ENCODE measurements at regions of chr12 and their contacts with region 1.

Region 1: DNA sequence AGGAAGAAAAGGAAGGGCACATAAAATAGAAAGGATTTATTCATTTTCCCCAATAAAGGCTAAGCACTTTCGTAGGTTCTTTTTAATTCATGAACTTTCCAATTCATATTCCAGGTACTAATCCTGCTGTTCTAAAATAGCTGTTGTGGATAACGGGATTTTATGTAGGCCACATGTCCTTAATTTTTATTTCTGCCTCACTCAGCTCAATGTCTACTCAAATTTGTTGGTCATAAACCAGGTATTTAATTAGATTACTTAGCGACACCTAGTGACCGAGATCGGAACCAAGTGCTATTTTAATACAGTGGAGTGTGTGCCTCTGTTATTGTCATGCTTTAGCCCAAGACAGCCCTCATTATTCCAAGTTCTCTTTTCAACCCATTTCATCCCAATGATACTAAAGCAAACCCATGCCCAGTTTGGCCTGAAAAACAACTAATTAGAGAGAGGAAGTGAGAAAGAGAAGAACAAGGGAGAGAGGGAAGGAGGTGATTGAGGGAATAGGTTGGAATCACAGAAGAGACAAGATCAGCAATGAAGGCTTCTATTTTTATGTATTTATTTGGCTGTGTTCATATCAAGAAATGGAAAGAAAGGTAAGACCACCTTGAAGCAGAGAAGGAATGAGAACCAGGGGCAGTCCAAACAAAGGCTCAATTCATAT is 45.9 kb upstream of the IFNG-AS1 start:
- DNase-seq: peak in 33 of 35 experiments; percentile 15 to 83 (median 50)
- ATAC-seq: peak; percentile 69 to 87 (median 77)
- H3K4me3 ChIP-seq: no peak overlapping the region
- H3K4me3 Mint-ChIP-seq: no peak overlapping the region
- H3K27ac ChIP-seq: no peak overlapping the region
- H3K27ac Mint-ChIP-seq: no peak overlapping the region
- H3K4me1 ChIP-seq: peaks cover 0 to 2% of the 10 kb centered on the region in 2 experiments
- H3K4me1 Mint-ChIP-seq: peaks cover 1 to 6% (median 5%) of the 10 kb centered on the region in 3 donors
- H3K27me3 ChIP-seq: no peaks in the 10 kb centered on the region
- H3K27me3 Mint-ChIP-seq: peaks cover 0 to under 1% of the 10 kb centered on the region in 2 donors

Region 2: DNA sequence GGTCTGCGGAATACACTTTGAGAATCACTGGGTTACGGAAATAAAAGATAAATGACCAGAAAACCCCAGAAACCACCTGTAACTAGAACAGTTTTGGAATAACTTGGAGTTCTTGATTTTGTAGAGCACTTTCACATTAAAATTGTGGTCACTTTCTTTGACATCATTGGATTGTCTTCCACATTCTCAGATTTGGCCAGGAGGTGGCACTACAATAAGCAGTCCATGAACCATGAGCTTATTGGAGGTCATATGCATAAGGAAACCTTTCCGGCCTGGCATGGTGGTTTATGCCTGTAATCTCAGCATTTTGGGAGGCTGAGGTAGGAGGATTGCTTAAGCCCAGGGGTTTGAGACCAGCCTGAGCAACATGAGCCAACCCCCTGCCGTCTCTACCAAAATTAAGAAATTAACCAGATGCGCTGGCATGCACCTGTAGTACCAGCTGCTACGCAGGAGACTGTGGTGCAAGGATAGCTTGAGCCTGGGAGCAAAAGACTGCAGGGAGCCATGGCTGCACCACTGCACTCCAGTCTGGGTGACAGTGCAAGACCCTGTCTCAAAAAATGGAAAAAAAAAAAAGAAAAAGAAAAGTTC is 781.9 kb before region 1 on chr12:
- CTCF ChIA-PET with region 1: interaction called, 5 to 12 read pairs
- POLR2A ChIA-PET with region 1: no interaction called
- DNase-seq: peak in 25 of 35 experiments; percentile 0 to 51 (median 10)
- ATAC-seq: no peak
- H3K4me3 ChIP-seq: no peak overlapping the region
- H3K4me3 Mint-ChIP-seq: no peak overlapping the region
- H3K27ac ChIP-seq: no peak overlapping the region
- H3K27ac Mint-ChIP-seq: no peak overlapping the region
- H3K4me1 ChIP-seq: no peaks in the 10 kb centered on the region
- H3K4me1 Mint-ChIP-seq: no peaks in the 10 kb centered on the region
- H3K27me3 ChIP-seq: peaks cover 0 to 2% of the 10 kb centered on the region in 2 experiments
- H3K27me3 Mint-ChIP-seq: peaks cover 4 to 17% of the 10 kb centered on the region in 2 donors

Region 3: GRCh38 chr12:67885375-67886169 is 57.8 kb before region 1 on chr12:
- CTCF ChIA-PET with region 1: no interaction called
- POLR2A ChIA-PET with region 1: no interaction called
- DNase-seq: no peak
- ATAC-seq: no peak
- H3K4me3 ChIP-seq: no peak overlapping the region
- H3K4me3 Mint-ChIP-seq: no peak overlapping the region
- H3K27ac ChIP-seq: no peak overlapping the region
- H3K27ac Mint-ChIP-seq: no peak overlapping the region
- H3K4me1 ChIP-seq: no peaks in the 10 kb centered on the region
- H3K4me1 Mint-ChIP-seq: peaks cover 1 to 11% (median 1%) of the 10 kb centered on the region in 3 donors
- H3K27me3 ChIP-seq: no peaks in the 10 kb centered on the region
- H3K27me3 Mint-ChIP-seq: peaks cover 3% of the 10 kb centered on the region in 2 donors

Region 4: GRCh38 chr12:67969134-67969802 is 25.9 kb after region 1 on chr12:
- CTCF ChIA-PET with region 1: interaction called, 4 to 5 read pairs
- POLR2A ChIA-PET with region 1: interaction called in 1 of 2 experiments, 13 read pairs
- DNase-seq: no peak
- ATAC-seq: no peak
- H3K4me3 ChIP-seq: no peak overlapping the region
- H3K4me3 Mint-ChIP-seq: no peak overlapping the region
- H3K27ac ChIP-seq: no peak overlapping the region
- H3K27ac Mint-ChIP-seq: no peak overlapping the region
- H3K4me1 ChIP-seq: no peaks in the 10 kb centered on the region
- H3K4me1 Mint-ChIP-seq: peaks cover 0 to 4% (median 0%) of the 10 kb centered on the region in 3 donors
- H3K27me3 ChIP-seq: no peaks in the 10 kb centered on the region
- H3K27me3 Mint-ChIP-seq: peaks cover 0 to 3% of the 10 kb centered on the region in 2 donors

Measured in T-cell (primary cell).